Caco-2 (cell line): ENCODE measurements at regions of chr3 and their contacts with region 1.

Region 1: GRCh38 chr3:4633078-4634004 is 140.2 kb downstream of the ITPR1 start:
- DNase-seq: peak in 1 of 2 experiments; percentile 39
- H3K4me3 ChIP-seq: no peak overlapping the region
- H3K4me3 Mint-ChIP-seq: no peak overlapping the region
- H3K27ac Mint-ChIP-seq: no peak overlapping the region
- H3K4me1 ChIP-seq: no peaks in the 10 kb centered on the region
- H3K4me1 Mint-ChIP-seq: no peaks in the 10 kb centered on the region
- H3K27me3 ChIP-seq: no peaks in the 10 kb centered on the region
- H3K27me3 Mint-ChIP-seq: no peaks in the 10 kb centered on the region
- CTCF ChIP-seq: peak; percentile 76 to 86

Region 2: GRCh38 chr3:4334548-4334947 is 298.8 kb before region 1 on chr3:
- CTCF ChIA-PET with region 1: no interaction called
- POLR2A ChIA-PET with region 1: interaction called, 3 read pairs
- intact Hi-C with region 1: loop called (anchors 1 kb)
- DNase-seq: no peak
- H3K4me3 ChIP-seq: no peak overlapping the region
- H3K4me3 Mint-ChIP-seq: no peak overlapping the region
- H3K27ac Mint-ChIP-seq: no peak overlapping the region
- H3K4me1 ChIP-seq: no peaks in the 10 kb centered on the region
- H3K4me1 Mint-ChIP-seq: no peaks in the 10 kb centered on the region
- H3K27me3 ChIP-seq: no peaks in the 10 kb centered on the region
- H3K27me3 Mint-ChIP-seq: no peaks in the 10 kb centered on the region
- CTCF ChIP-seq: no peak

Region 3: DNA sequence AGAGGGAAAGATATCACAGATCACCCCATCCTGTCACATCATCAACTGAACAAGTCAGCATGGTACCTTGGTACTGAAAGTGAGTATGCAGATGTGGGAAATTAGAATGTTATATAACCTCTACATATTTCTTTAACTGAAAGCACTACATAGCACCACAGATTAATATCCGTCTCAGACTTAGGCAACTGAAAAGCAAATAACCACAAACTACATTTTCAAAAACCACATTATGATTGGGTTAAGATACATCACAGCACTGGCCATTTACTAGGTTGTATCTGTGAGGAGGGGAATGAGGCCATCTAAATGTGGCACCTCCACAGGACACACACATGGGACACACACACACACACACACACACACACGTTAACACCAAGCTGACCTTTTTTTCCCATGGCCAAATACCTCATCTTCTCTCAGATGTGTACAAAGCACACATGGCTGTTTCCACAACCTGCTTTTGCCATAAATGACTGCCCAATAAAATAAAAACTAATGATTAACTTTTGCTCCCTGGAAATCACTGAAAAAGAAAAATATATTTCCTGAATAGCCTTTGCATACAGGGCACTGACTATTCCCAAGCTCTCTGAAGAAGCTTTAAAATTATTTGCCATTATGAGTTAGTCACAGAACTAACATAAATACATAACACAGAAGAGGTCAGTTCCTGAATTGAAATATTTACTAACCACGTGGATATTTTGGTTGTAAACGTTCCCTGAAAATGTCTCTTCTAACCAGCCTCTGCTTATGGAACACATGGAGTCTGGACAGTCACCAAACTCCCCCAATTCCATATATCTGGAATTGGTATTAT is 226.4 kb before region 1 on chr3:
- CTCF ChIA-PET with region 1: no interaction called
- POLR2A ChIA-PET with region 1: no interaction called
- intact Hi-C with region 1: no loop called
- DNase-seq: peak in 1 of 2 experiments; percentile 5
- H3K4me3 ChIP-seq: no peak overlapping the region
- H3K4me3 Mint-ChIP-seq: no peak overlapping the region
- H3K27ac Mint-ChIP-seq: no peak overlapping the region
- H3K4me1 ChIP-seq: no peaks in the 10 kb centered on the region
- H3K4me1 Mint-ChIP-seq: peaks cover 6% of the 10 kb centered on the region
- H3K27me3 ChIP-seq: no peaks in the 10 kb centered on the region
- H3K27me3 Mint-ChIP-seq: no peaks in the 10 kb centered on the region
- CTCF ChIP-seq: no peak

Region 4: DNA sequence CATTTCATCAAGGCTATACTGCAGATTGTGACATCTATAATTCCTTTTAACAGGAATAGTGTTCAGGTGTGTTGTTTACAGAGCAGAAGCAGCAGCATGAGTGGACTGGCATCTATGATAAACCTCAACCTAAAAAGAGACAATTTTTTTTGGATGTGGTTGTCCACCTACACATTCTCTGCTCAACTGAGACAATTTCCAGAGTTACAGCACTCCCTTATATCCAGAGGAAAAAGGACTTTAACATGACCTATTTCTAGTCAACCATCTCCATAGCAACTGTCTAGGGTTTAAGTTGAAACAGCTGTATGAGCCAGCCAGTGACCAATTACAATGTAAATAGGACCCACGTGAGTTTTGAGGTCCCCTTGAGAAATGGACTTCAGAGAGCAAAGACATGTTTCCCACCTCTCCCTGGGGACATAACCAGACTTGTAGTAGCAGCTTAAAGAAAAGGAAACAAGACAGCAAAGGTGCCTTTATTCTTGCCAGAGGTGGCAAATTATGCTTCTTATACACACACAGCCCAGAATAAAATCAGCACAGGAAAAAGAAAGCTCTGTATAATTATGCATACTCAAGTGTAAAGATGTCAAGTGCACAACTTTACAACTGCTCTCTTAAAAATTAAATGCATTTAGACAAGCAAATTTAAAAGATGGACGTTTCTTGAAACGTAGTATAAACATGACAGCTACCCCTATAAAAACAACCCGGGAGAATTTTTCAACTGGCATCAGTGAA is 206.6 kb before region 1 on chr3:
- CTCF ChIA-PET with region 1: no interaction called
- POLR2A ChIA-PET with region 1: no interaction called
- intact Hi-C with region 1: loop called (anchors 5 kb)
- DNase-seq: peak in 1 of 2 experiments; percentile 13
- H3K4me3 ChIP-seq: no peak overlapping the region
- H3K4me3 Mint-ChIP-seq: no peak overlapping the region
- H3K27ac Mint-ChIP-seq: peak overlapping the region; percentile 63
- H3K4me1 ChIP-seq: peaks cover 12% of the 10 kb centered on the region
- H3K4me1 Mint-ChIP-seq: peaks cover 17% of the 10 kb centered on the region
- H3K27me3 ChIP-seq: no peaks in the 10 kb centered on the region
- H3K27me3 Mint-ChIP-seq: no peaks in the 10 kb centered on the region
- CTCF ChIP-seq: no peak

Region 5: GRCh38 chr3:4776980-4777581 is 143.7 kb after region 1 on chr3:
- CTCF ChIA-PET with region 1: no interaction called
- POLR2A ChIA-PET with region 1: no interaction called
- intact Hi-C with region 1: no loop called
- DNase-seq: peak in 1 of 2 experiments; percentile 36
- H3K4me3 ChIP-seq: no peak overlapping the region
- H3K4me3 Mint-ChIP-seq: no peak overlapping the region
- H3K27ac Mint-ChIP-seq: no peak overlapping the region
- H3K4me1 ChIP-seq: peaks cover 9% of the 10 kb centered on the region; the same call in 1 of the 2 replicates
- H3K4me1 Mint-ChIP-seq: peaks cover 7% of the 10 kb centered on the region
- H3K27me3 ChIP-seq: no peaks in the 10 kb centered on the region
- H3K27me3 Mint-ChIP-seq: no peaks in the 10 kb centered on the region
- CTCF ChIP-seq: no peak